HEK293 (cell line): ENCODE measurements at regions of chr11 and their contacts with region 1.

Region 1: DNA sequence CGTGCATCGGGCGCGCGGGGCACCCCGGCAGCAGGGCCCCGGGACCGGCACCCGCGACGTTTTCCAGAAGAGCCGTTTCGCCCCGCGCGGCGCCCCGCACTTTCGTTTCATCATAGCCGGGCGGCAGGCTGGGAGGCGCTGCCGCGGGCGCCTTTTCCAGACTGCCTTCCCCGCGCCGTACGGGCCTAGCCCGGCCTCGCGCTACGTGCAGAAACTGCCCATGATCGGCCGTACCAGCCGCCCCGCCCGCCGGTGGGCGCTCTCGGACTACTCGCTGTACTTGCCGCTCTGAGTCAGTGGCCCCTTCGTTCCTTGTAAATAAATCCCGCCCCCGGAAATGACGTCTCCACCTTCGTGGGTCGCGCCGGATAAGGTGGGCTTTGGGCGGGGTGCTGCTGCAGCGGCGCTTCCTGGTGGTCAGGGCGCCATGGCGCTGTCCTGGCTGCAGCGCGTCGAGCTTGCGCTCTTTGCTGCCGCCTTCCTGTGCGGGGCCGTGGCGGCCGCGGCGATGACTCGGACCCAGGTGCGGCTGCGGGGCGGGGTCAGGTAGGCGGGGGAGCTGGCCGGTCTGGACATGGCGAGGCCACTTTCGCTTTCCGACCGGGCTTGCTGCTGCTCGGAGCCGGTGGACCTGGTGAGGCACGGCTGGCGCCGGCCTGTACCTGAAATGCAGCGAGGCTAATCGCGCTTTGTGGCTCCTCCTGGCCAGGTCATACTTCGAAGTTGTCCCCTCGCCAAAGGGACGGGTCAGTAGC is at the start of gene TMEM179B:
- H3K4me3 ChIP-seq: peak within 1 kb of the TSS; percentile 87
- H3K27ac ChIP-seq: peak within 1 kb of the TSS; percentile 76
- H3K4me1 ChIP-seq: no peaks in the 10 kb centered on the region
- CTCF ChIP-seq: peak; percentile 97

Region 2: GRCh38 chr11:62771144-62772021 is 15.8 kb before region 1 on chr11 and contains the start of gene TAF6L:
- CTCF ChIA-PET with region 1: interaction called, 45 read pairs
- POLR2A ChIA-PET with region 1: interaction called, 18 read pairs
- H3K4me3 ChIP-seq: peak within 1 kb of the TSS; percentile 71
- H3K27ac ChIP-seq: peak within 1 kb of the TSS; percentile 72
- H3K4me1 ChIP-seq: no peaks in the 10 kb centered on the region
- CTCF ChIP-seq: no peak; the same call in 1 of the 2 replicates

Region 3: DNA sequence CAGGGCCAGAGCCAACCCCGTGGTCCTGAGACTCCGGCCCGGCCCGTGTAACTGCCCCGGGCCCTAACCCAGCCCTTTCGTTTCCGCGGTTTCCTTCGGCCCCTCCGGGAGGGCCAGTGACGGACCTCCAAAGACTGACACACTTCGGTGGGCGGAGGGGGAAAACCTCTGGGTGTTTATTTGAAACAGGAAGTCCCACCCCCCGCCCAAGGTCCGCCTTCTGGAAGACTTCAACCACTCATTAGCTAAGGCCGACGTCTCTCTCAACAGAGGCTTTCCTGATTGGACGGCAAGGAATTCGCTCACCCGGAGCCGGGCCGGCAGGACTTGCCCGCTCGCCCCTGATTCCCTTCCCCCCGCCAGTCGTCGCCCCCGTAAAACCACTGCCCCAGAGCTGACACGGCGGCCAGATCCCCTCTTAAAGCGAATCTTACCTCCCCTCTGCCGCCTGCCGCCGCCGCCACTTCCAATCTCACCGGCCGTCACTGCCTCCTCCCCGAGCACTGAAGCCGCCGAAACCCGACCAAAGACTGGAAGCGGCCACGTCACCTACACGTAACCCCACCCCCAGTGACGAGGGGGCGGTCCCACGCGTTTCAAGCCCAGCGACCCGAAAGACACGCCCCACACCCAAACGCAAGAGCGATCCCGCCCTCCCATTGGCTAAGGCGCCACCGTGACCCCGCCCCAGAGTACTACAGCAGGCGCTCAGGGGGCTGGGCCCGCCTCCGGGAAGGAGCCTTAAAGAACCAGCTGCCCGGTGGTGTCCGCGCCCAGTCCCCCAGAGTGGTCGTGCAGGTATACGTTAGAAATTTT is 44.5 kb after region 1 on chr11 and contains the start of gene STX5:
- CTCF ChIA-PET with region 1: interaction called, 13 read pairs
- POLR2A ChIA-PET with region 1: interaction called, 40 read pairs
- H3K4me3 ChIP-seq: peak within 1 kb of the TSS; percentile 87
- H3K27ac ChIP-seq: peak within 1 kb of the TSS; percentile 88
- H3K4me1 ChIP-seq: peaks cover 2% of the 10 kb centered on the region; the same call in 1 of the 2 replicates
- CTCF ChIP-seq: no peak

Region 4: DNA sequence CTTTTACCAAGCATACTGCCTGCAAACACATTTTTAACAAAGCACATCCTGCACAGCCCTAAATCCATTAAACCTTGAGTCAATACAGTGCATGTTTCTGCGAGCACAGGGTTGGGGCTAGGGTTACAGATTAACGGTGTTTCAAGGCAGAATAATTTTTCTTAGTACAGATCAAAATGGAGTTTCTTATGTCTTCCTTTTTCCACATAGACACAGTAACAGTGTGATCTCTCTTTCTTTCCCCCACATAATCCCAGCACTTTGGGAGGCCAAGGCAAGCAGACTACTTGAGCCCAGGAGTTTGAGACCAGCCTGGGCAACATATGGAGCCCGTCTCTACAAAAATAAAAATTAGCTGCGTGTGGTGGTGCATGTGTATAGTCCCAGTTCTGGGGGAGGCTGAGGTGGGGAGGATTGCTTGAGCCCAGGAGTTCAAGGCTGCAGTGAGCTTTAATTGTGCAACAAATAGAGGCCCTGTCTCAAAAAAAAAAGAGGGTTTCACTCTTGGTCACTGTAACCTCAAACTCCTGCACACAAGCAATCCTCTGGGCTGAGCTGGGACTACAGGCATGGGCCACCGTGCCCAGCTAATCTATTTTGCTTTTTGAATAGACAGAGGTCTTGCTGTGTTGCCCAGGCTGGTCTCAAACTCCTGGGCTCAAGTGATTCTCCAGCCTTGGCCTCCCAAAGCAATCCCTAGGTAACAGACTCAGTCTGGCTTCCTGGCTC is 73.8 kb after region 1 on chr11:
- CTCF ChIA-PET with region 1: interaction called, 24 read pairs
- POLR2A ChIA-PET with region 1: interaction called, 18 read pairs
- H3K4me3 ChIP-seq: no peak overlapping the region
- H3K27ac ChIP-seq: peak overlapping the region; percentile 0; the same call in 1 of the 2 replicates
- H3K4me1 ChIP-seq: no peaks in the 10 kb centered on the region
- CTCF ChIP-seq: no peak